ENCODE measurements at regions of chr6 and their contacts with region 1.

Region 1: DNA sequence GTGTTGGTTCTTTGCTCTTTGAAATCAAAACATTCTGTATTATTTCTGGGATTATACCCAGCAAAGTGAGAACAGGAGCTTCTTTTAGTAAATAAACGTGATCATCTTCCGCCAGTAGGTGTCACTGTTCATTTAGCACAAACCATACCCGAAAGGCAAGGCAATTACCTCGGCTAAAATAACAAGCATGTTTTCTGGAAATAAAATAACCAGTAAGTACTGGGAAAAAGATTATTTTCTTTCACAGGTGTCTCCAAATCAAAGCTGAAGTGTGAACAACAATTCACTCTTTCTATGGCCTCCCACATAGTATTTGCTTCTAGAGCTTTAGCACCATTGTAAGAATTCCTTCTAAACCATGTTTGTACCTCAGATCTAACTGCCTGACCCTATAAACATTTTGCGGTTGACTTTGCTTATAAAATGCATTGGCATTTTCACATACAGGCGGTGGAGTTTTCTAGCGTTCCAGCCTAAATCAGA is 144.6 kb upstream of the AGPAT4 start:
- DNase-seq: no peak

Region 2: GRCh38 chr6:161498359-161498758 is 79.9 kb after region 1 on chr6:
- intact Hi-C with region 1: loop called (anchors 5 kb)
- DNase-seq: no peak

Region 3: DNA sequence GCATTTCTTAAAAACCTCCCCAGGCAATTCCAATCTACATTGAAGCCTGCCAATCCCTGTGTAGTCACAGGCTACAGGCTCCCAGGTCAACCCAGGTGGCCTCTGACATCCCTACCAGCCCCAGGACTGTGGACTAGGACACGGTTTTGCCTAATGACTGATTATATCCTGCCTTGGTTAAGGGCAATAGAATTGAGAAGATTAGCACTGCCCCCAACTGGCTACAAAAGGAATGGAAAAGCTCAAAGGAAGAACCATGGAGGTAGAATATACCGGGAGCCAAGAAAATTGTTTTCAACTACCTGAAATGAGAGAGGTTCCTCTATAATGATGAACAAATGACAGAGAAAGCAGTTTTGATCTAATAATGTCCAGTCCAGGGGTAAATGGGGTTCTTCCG is 276.5 kb after region 1 on chr6:
- intact Hi-C with region 1: loop called (anchors 10 kb)
- DNase-seq: no peak

Region 4: DNA sequence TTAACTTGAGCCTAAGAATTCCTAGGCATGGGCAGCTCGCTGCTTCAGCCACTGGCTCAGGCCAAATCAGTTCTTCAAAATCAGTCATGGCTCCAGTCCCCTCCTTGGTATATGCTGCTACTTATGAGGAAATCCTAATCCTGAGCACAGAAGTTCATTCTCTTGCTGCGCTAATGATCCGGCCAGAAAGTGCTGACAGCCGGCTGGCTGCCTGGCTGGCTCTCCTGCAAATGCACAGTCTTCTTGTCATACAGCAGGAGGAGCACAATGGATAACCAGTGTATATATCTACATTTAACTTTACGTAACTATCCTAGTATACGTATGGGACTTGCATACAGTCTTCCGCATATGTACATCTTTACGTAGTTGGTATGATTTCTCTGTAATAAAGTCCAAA is 808.3 kb after region 1 on chr6:
- intact Hi-C with region 1: no loop called
- DNase-seq: no peak